H1 (cell line): ENCODE measurements at regions of chr11 and their contacts with region 1.

Region 1: GRCh38 chr11:92286709-92287108 is 62.1 kb downstream of the FAT3 start:
- DNase-seq: no peak
- H3K4me3 ChIP-seq: no peak overlapping the region
- H3K27ac ChIP-seq: no peak overlapping the region
- H3K4me1 ChIP-seq: peaks cover 0 to 4% (median 3%) of the 10 kb centered on the region in 4 experiments; a peak in 4 of 7 replicates
- H3K27me3 ChIP-seq: no peaks in the 10 kb centered on the region
- CTCF ChIP-seq: no peak
- EP300 ChIP-seq: no peak
- POLR2A ChIP-seq: no peak
- RAD21 ChIP-seq: no peak

Region 2: DNA sequence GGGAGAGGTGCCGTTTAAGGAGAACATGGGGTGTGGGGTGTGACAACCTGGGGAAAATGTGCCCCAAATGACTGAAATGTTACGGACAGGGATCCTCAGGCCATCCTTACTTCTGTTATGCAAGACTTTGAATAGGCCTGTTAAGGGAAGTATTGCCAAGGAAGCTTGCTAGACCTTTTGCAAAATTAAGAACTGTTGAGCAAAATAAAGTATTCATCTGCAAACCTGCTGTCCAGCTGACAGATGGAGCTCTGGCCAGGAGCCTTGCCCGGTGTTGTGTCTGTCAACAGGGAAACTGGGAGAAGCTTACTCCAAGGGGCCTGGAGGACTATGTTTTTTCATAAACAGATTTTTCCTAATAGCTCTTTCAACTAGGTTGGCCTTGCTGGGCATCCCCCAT is 14.1 kb before region 1 on chr11:
- CTCF ChIA-PET with region 1: interaction called, 14 read pairs
- POLR2A ChIA-PET with region 1: interaction called, 4 read pairs
- DNase-seq: no peak
- H3K4me3 ChIP-seq: no peak overlapping the region
- H3K27ac ChIP-seq: no peak overlapping the region
- H3K4me1 ChIP-seq: peaks cover 2 to 8% (median 5%) of the 10 kb centered on the region in 4 experiments; a peak in 5 of 7 replicates
- H3K27me3 ChIP-seq: no peaks in the 10 kb centered on the region
- CTCF ChIP-seq: no peak
- EP300 ChIP-seq: no peak
- POLR2A ChIP-seq: no peak
- RAD21 ChIP-seq: no peak

Region 3: GRCh38 chr11:92297567-92298553 is 11.2 kb after region 1 on chr11:
- CTCF ChIA-PET with region 1: interaction called, 12 read pairs
- POLR2A ChIA-PET with region 1: interaction called, 5 read pairs
- DNase-seq: no peak
- H3K4me3 ChIP-seq: no peak overlapping the region
- H3K27ac ChIP-seq: no peak overlapping the region
- H3K4me1 ChIP-seq: peaks cover 0 to 3% (median 0%) of the 10 kb centered on the region in 4 experiments; a peak in 1 of 7 replicates
- H3K27me3 ChIP-seq: no peaks in the 10 kb centered on the region
- CTCF ChIP-seq: no peak
- EP300 ChIP-seq: no peak
- POLR2A ChIP-seq: no peak
- RAD21 ChIP-seq: no peak

Region 4: GRCh38 chr11:92329646-92330045 is 42.9 kb after region 1 on chr11:
- CTCF ChIA-PET with region 1: no interaction called
- POLR2A ChIA-PET with region 1: no interaction called
- DNase-seq: no peak
- H3K4me3 ChIP-seq: no peak overlapping the region
- H3K27ac ChIP-seq: peak overlapping the region; percentile 21; the same call in 1 of the 2 replicates
- H3K4me1 ChIP-seq: peaks cover 2 to 12% (median 8%) of the 10 kb centered on the region in 4 experiments; a peak in 5 of 7 replicates
- H3K27me3 ChIP-seq: no peaks in the 10 kb centered on the region
- CTCF ChIP-seq: no peak
- EP300 ChIP-seq: no peak
- POLR2A ChIP-seq: no peak
- RAD21 ChIP-seq: no peak

Region 5: DNA sequence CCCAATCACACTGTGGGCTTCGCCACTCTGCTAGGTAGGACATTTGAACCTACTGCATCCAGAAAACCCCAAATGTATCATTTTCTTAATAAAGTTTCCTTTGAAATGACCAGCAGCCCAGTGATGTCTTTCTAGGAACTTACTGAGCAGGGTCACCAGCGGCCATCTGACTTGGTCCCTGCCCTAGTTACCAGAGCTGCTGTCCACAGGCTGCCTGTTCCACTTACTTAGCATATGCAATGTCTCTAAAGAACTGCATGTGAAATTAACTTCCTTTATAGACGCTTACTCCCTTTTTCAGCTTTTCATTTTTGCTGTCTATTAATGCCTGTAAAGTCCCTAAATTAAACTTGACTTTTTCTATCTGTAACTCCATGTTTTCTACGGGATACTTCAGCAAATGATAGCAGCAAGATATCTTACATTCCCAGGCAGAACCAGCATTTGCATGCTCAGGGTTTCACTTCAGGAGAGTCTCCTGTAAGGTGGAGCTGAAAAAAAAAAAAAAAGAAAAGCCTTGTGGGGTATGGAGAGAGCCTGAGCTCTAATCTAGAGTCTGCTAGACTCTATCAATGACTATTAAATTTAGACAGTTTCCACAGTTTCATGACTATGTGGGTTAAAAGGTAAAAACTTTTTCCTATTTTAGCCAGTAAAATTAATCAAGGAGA is 62.9 kb after region 1 on chr11:
- CTCF ChIA-PET with region 1: no interaction called
- POLR2A ChIA-PET with region 1: no interaction called
- DNase-seq: no peak
- H3K4me3 ChIP-seq: no peak overlapping the region
- H3K27ac ChIP-seq: no peak overlapping the region
- H3K4me1 ChIP-seq: peaks cover 4 to 14% (median 7%) of the 10 kb centered on the region in 4 experiments; a peak in 6 of 7 replicates
- H3K27me3 ChIP-seq: no peaks in the 10 kb centered on the region
- CTCF ChIP-seq: no peak
- EP300 ChIP-seq: no peak
- POLR2A ChIP-seq: no peak
- RAD21 ChIP-seq: no peak